Activated CD4-positive, alpha-beta memory T cell treated with anti-CD3 and anti-CD28 coated beads, Interleukin-2, amount 10 ng/mL, durations not matched to agents 7 days and 5 days (primary cell): ENCODE measurements at regions of chr11 and their contacts with region 1.

Region 1: DNA sequence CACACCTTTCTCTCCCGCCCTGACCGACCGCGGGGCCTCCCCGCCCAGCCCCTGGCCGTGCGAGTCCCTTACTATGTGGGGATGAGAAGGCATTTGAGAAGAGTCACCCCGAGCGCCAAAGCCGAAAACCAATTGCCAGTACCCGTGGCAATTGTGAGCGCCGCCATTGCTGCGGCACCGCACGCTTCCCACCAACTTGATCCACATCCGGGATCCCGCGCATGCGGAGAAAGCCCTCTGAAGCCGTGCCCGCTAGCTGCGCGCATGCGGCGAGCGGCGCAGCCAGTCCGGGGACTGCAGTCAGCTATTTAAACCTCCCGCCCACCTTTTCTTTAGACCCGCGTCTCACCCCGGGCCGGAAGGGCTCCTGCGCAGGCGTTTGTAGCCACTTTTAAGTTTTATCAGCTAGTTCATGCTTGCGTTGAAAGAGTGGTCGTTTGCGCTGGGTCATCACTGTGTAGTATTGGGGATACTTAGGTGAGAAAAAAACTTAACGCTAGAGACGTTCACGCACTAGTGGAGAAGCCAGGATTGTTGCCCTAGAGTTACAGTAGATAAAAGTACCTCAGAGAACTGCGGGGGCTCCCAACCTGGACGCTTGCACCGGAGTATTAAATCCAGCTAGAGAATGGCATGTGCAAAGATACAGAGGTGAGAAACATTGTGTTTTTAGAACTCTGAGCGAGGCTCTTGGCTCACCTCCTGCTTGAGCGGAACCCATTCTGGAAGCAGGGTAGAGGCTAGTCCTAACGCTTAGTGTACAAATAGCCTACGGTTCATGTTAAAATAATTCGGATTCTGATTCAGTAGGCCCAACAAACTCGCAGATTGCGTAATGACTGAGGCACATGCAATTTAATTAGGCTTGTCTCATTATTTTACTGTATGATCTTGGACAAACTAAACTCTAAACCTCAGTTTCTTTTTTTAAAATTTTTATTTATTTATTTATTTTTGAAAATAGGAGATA is at the start of gene ALG8:
- DNase-seq: peak; percentile 96
- H3K4me3 Mint-ChIP-seq: peak within 1 kb of the TSS; percentile 85
- H3K27ac Mint-ChIP-seq: peak within 1 kb of the TSS; percentile 91
- H3K4me1 Mint-ChIP-seq: peaks cover 52% of the 10 kb centered on the region
- H3K27me3 Mint-ChIP-seq: no peaks in the 10 kb centered on the region
- total RNA-seq, gene ALG8: 40.2 to 48.1 TPM

Region 2: GRCh38 chr11:78079232-78080083 is 60.2 kb before region 1 on chr11 and contains the start of gene NDUFC2:
- CTCF ChIA-PET with region 1: interaction called, 3 read pairs
- POLR2A ChIA-PET with region 1: interaction called, 19 read pairs
- DNase-seq: peak; percentile 77
- H3K4me3 Mint-ChIP-seq: peak within 1 kb of the TSS; percentile 94
- H3K27ac Mint-ChIP-seq: peak within 1 kb of the TSS; percentile 88
- H3K4me1 Mint-ChIP-seq: peaks cover 51% of the 10 kb centered on the region
- H3K27me3 Mint-ChIP-seq: no peaks in the 10 kb centered on the region
- total RNA-seq, gene NDUFC2: 204 to 210 TPM

Region 3: GRCh38 chr11:78177216-78177615 is 37.5 kb after region 1 on chr11:
- CTCF ChIA-PET with region 1: no interaction called
- POLR2A ChIA-PET with region 1: no interaction called
- DNase-seq: no peak
- H3K4me3 Mint-ChIP-seq: no peak overlapping the region
- H3K27ac Mint-ChIP-seq: no peak overlapping the region
- H3K4me1 Mint-ChIP-seq: no peaks in the 10 kb centered on the region
- H3K27me3 Mint-ChIP-seq: no peaks in the 10 kb centered on the region

Region 4: DNA sequence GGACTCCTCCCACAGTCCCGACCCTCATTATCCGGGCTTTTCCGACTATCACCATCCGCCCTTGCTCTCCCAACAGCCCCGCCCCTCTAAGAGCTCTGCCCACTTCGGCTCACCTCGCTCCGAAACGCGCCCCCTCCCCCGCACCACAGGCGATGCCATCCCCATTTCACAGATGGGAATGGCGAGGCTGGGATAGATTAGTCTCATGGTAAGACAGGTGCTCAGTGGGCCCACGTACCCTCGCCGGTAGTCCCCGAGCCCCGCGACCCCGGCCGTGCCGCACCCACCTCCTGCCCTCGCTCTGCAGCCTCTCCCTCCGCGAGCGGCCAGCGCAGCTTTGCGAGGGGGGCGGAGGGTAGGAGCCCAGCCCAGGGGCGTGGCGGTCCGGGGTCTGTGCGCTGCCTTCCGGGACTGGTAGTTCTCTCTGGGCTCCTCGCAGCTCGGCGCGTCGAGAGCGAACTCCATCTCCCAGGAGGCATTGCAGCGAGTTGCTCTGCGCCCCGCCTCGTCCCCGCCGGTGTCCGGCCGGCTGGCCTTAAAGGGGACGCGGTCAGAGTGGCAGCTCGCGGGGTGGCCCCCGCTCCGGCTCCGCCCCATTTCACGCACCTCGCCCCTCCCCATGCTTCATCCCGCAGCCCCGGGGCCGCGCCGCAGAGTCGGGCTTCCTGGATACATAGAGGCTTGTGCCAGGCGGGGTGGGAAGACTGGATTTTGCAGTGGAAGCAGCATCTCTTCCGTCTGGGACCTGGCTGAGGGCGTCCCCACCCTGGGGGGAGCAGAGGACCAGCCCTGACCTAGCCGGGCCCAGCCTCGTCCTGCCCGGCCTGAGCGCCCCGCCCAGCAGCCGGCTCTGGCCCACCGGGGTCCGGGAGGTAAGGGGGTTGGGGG is 48.8 kb after region 1 on chr11 and contains the starts of genes KCTD21 and USP35:
- CTCF ChIA-PET with region 1: interaction called, 16 read pairs
- POLR2A ChIA-PET with region 1: interaction called, 24 read pairs
- DNase-seq: peak; percentile 93
- H3K4me3 Mint-ChIP-seq: peak within 1 kb of the TSS; percentile 98
- H3K27ac Mint-ChIP-seq: peak within 1 kb of the TSS; percentile 82
- H3K4me1 Mint-ChIP-seq: peaks cover 48% of the 10 kb centered on the region
- H3K27me3 Mint-ChIP-seq: no peaks in the 10 kb centered on the region
- total RNA-seq, gene KCTD21: 7.5 to 9.3 TPM
- total RNA-seq, gene USP35: 10.8 to 12.1 TPM

Region 5: DNA sequence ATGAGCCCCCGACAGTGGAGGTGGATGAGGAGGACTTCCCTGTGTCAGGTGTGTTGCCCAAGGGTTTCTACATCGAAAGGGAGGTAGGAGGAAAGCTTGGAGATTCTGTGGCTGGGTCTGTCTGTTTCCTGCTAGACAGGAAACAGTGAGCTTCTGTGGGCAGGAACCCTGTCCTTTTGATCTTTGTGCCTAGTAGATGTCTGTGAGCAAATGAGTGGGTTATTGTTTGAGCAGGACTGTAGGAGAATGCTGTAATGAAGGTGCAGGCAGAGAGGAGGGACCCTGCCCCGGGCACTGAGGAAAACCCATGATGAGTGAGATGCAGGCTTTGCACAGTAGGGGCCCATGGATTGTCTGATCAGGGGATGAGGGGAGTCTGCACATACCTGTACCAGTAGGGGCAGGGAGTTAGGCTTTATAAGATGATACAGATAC is 63.0 kb after region 1 on chr11:
- CTCF ChIA-PET with region 1: no interaction called
- POLR2A ChIA-PET with region 1: interaction called, 12 read pairs
- DNase-seq: peak; percentile 61
- H3K4me3 Mint-ChIP-seq: peak overlapping the region; percentile 60
- H3K27ac Mint-ChIP-seq: peak overlapping the region; percentile 82
- H3K4me1 Mint-ChIP-seq: peaks cover 31% of the 10 kb centered on the region
- H3K27me3 Mint-ChIP-seq: no peaks in the 10 kb centered on the region